ENCODE measurements at regions of chr1 and their contacts with region 1.

Region 1: GRCh38 chr1:35930593-35931445 is at the start of gene AGO3:
- DNase-seq: peak; percentile 70 to 97 (median 84)
- ATAC-seq: peak; percentile 79
- H3K4me3 ChIP-seq: peak within 1 kb of the TSS; percentile 66 to 93
- H3K4me3 Mint-ChIP-seq: peak within 1 kb of the TSS; percentile 94
- H3K27ac ChIP-seq: peak within 1 kb of the TSS; percentile 96
- H3K27ac Mint-ChIP-seq: peak within 1 kb of the TSS; percentile 98
- H3K4me1 ChIP-seq: peaks cover 28% of the 10 kb centered on the region
- H3K4me1 Mint-ChIP-seq: peaks cover 35% of the 10 kb centered on the region
- H3K27me3 ChIP-seq: no peaks in the 10 kb centered on the region
- H3K27me3 Mint-ChIP-seq: no peaks in the 10 kb centered on the region
- CTCF ChIP-seq: no peak
- total RNA-seq, gene AGO3: 27.6 to 30.2 TPM

Region 2: GRCh38 chr1:35769759-35770446 is 160.9 kb before region 1 on chr1 and contains the start of gene CLSPN:
- CTCF ChIA-PET with region 1: no interaction called
- POLR2A ChIA-PET with region 1: interaction called, 6 read pairs
- intact Hi-C with region 1: loop called in 1 of 2 experiments (anchors 5 kb)
- DNase-seq: peak; percentile 86 to 96 (median 93)
- ATAC-seq: peak; percentile 94
- H3K4me3 ChIP-seq: peak within 1 kb of the TSS; percentile 90 to 97
- H3K4me3 Mint-ChIP-seq: peak within 1 kb of the TSS; percentile 99
- H3K27ac ChIP-seq: peak within 1 kb of the TSS; percentile 61 to 81
- H3K27ac Mint-ChIP-seq: peak within 1 kb of the TSS; percentile 92
- H3K4me1 ChIP-seq: peaks cover 5% of the 10 kb centered on the region
- H3K4me1 Mint-ChIP-seq: peaks cover 8% of the 10 kb centered on the region
- H3K27me3 ChIP-seq: no peaks in the 10 kb centered on the region
- H3K27me3 Mint-ChIP-seq: no peaks in the 10 kb centered on the region
- CTCF ChIP-seq: no peak
- total RNA-seq, gene CLSPN: 0.41 to 0.81 TPM

Region 3: DNA sequence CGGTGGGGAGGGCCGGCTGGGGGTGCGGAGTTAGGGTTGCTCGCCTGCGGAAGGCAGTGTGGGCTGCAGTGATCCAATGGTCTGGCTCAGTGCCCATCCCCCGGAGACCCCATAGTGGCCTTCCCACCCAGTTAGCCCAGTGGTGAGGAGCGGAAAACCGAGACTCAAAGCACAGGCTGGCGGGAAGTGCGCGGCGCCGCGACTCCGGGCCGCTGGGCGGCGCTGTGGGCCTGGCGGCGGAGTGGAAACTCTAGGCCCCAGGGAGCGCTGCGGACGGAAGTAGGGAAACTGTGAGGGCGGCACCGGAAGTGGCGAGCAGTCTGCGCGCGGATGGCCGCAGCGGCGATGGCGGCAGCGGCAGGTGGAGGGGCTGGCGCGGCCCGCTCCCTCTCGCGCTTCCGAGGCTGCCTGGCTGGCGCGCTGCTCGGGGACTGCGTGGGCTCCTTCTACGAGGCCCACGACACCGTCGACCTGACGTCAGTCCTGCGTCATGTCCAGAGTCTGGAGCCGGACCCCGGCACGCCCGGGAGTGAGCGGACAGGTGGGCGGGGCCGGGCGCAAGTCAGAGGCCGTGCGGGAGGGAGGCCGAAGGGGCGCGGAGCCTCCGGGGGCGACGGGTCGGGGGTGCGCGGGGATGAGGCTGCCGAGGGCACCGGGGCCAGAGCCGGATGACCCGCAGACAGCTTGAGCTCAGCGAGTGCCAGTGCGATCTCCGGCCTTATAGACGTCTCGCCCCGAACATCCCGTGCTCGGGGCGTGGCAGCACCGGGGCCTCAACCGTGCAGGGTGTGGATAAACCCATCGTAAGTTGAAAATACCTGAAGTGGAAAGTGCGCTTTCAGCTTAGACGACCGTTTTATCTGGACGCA is 158.0 kb after region 1 on chr1 and contains the start of gene ADPRS:
- CTCF ChIA-PET with region 1: no interaction called
- POLR2A ChIA-PET with region 1: interaction called, 4 read pairs
- intact Hi-C with region 1: loop called (anchors 1 to 2 kb)
- DNase-seq: peak; percentile 81 to 96 (median 91)
- ATAC-seq: peak; percentile 89
- H3K4me3 ChIP-seq: peak within 1 kb of the TSS; percentile 89 to 98
- H3K4me3 Mint-ChIP-seq: peak within 1 kb of the TSS; percentile 90
- H3K27ac ChIP-seq: peak within 1 kb of the TSS; percentile 84 to 95
- H3K27ac Mint-ChIP-seq: peak within 1 kb of the TSS; percentile 94
- H3K4me1 ChIP-seq: peaks cover 24% of the 10 kb centered on the region
- H3K4me1 Mint-ChIP-seq: peaks cover 25% of the 10 kb centered on the region
- H3K27me3 ChIP-seq: peaks cover 5 to 6% of the 10 kb centered on the region in 2 experiments
- H3K27me3 Mint-ChIP-seq: peaks cover 15% of the 10 kb centered on the region
- CTCF ChIP-seq: peak; percentile 98
- total RNA-seq, gene ADPRS: 26.2 to 26.7 TPM

Region 4: GRCh38 chr1:36231191-36231590 is 300.4 kb after region 1 on chr1:
- CTCF ChIA-PET with region 1: no interaction called
- POLR2A ChIA-PET with region 1: no interaction called
- intact Hi-C with region 1: no loop called
- DNase-seq: no peak
- ATAC-seq: no peak
- H3K4me3 ChIP-seq: no peak overlapping the region
- H3K4me3 Mint-ChIP-seq: no peak overlapping the region
- H3K27ac ChIP-seq: no peak overlapping the region
- H3K27ac Mint-ChIP-seq: peak overlapping the region; percentile 11
- H3K4me1 ChIP-seq: peaks cover 27% of the 10 kb centered on the region
- H3K4me1 Mint-ChIP-seq: peaks cover 62% of the 10 kb centered on the region
- H3K27me3 ChIP-seq: no peaks in the 10 kb centered on the region
- H3K27me3 Mint-ChIP-seq: no peaks in the 10 kb centered on the region
- CTCF ChIP-seq: no peak

Region 5: GRCh38 chr1:36450270-36450918 is 519.6 kb after region 1 on chr1 and contains the start of gene OSCP1:
- CTCF ChIA-PET with region 1: no interaction called
- POLR2A ChIA-PET with region 1: no interaction called
- intact Hi-C with region 1: loop called (anchors 2 kb)
- DNase-seq: peak; percentile 74 to 94 (median 84)
- ATAC-seq: peak; percentile 97
- H3K4me3 ChIP-seq: peak within 1 kb of the TSS; percentile 74 to 76
- H3K4me3 Mint-ChIP-seq: peak within 1 kb of the TSS; percentile 95
- H3K27ac ChIP-seq: peak within 1 kb of the TSS; percentile 83 to 90
- H3K27ac Mint-ChIP-seq: peak within 1 kb of the TSS; percentile 98
- H3K4me1 ChIP-seq: peaks cover 5% of the 10 kb centered on the region
- H3K4me1 Mint-ChIP-seq: peaks cover 17% of the 10 kb centered on the region
- H3K27me3 ChIP-seq: no peaks in the 10 kb centered on the region
- H3K27me3 Mint-ChIP-seq: no peaks in the 10 kb centered on the region
- CTCF ChIP-seq: no peak
- total RNA-seq, gene OSCP1: 1.8 to 2.0 TPM

Measured in CD8-positive, alpha-beta T cell (primary cell).